PC-9 (cell line): ENCODE measurements at regions of chr7 and their contacts with region 1.

Region 1: GRCh38 chr7:74371381-74372341 is 82.0 kb upstream of the GTF2IRD1 start:
- DNase-seq: peak; percentile 49 to 51
- H3K4me3 ChIP-seq: no peak overlapping the region
- H3K27ac ChIP-seq: peak overlapping the region; percentile 44
- H3K4me1 ChIP-seq: peaks cover 17% of the 10 kb centered on the region
- H3K27me3 ChIP-seq: no peaks in the 10 kb centered on the region
- CTCF ChIP-seq: no peak

Region 2: GRCh38 chr7:74121401-74122249 is 250.0 kb before region 1 on chr7:
- CTCF ChIA-PET with region 1: no interaction called
- POLR2A ChIA-PET with region 1: no interaction called
- intact Hi-C with region 1: no loop called
- DNase-seq: no peak
- H3K4me3 ChIP-seq: no peak overlapping the region
- H3K27ac ChIP-seq: no peak overlapping the region
- H3K4me1 ChIP-seq: no peaks in the 10 kb centered on the region
- H3K27me3 ChIP-seq: no peaks in the 10 kb centered on the region
- CTCF ChIP-seq: no peak

Region 3: GRCh38 chr7:74306730-74307469 is 64.8 kb before region 1 on chr7:
- CTCF ChIA-PET with region 1: interaction called, 13 read pairs
- POLR2A ChIA-PET with region 1: no interaction called
- intact Hi-C with region 1: loop called (anchors 10 kb)
- DNase-seq: no peak
- H3K4me3 ChIP-seq: no peak overlapping the region
- H3K27ac ChIP-seq: no peak overlapping the region
- H3K4me1 ChIP-seq: peaks cover 23% of the 10 kb centered on the region
- H3K27me3 ChIP-seq: no peaks in the 10 kb centered on the region
- CTCF ChIP-seq: no peak

Region 4: DNA sequence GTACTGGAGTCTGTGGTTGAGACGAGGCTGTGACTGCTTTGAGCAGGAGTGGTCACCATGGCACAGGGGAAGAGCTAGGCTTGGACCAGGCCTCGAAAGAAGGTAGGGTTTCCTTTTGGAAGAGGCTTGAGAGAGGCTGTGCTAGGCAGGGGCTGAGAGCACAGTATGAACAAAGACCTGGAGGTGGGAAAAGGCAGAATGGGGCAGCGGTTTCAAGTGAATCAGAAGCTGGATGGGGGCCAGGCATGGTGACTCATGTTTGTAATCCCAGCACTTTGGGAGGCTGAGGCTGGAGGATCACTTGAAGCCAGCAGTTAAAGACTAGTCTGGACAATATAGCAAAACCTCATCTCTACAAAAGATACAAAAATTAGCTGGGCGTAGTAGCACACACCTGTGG is 16.6 kb before region 1 on chr7:
- CTCF ChIA-PET with region 1: interaction called, 13 read pairs
- POLR2A ChIA-PET with region 1: no interaction called
- intact Hi-C with region 1: no loop called
- DNase-seq: peak; percentile 63 to 67
- H3K4me3 ChIP-seq: no peak overlapping the region
- H3K27ac ChIP-seq: no peak overlapping the region
- H3K4me1 ChIP-seq: peaks cover 12% of the 10 kb centered on the region
- H3K27me3 ChIP-seq: no peaks in the 10 kb centered on the region
- CTCF ChIP-seq: no peak

Region 5: DNA sequence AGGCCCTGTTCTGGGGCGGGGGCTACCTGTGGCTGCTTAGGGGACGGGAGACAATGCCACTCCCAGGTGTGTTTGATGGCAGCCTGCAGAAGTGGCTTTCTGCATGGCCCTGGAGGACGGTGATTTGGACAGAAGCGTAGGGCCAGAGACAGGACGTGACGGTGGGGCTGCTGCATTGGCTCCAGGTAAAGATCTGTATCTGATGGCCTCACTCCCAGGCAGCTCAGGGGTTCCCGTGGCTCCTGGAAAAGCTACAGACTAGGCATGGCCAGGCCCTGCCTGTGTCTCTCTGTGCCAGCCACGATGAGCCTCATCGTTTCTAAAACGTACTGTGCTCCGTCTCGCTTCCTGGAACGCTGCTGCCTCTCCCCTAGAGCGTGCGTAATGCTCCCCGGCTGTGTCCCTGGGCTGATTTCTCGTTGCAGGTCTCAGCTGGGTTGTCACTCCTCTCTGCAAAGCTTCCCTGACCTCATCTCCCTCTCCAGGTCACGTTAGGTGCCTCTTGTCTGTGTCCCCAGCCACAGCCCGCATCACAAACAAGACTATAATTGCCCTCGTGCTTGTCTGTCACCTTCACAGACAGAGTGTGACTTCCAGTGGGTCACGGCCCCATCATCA is 94.6 kb after region 1 on chr7:
- CTCF ChIA-PET with region 1: no interaction called
- POLR2A ChIA-PET with region 1: no interaction called
- intact Hi-C with region 1: no loop called
- DNase-seq: no peak
- H3K4me3 ChIP-seq: no peak overlapping the region
- H3K27ac ChIP-seq: no peak overlapping the region
- H3K4me1 ChIP-seq: peaks cover 38% of the 10 kb centered on the region
- H3K27me3 ChIP-seq: no peaks in the 10 kb centered on the region
- CTCF ChIP-seq: no peak